H1 (cell line): ENCODE measurements at regions of chr20 and their contacts with region 1.

Region 1: GRCh38 chr20:44217342-44218092 is 6.9 kb upstream of the OSER1 start:
- DNase-seq: peak; percentile 66 to 81
- H3K4me3 ChIP-seq: no peak overlapping the region
- H3K27ac ChIP-seq: no peak overlapping the region
- H3K4me1 ChIP-seq: peaks cover 0 to 2% (median 0%) of the 10 kb centered on the region in 4 experiments; a peak in 1 of 7 replicates
- H3K27me3 ChIP-seq: no peaks in the 10 kb centered on the region
- CTCF ChIP-seq: peak; percentile 94 to 98 (median 95)
- EP300 ChIP-seq: no peak
- POLR2A ChIP-seq: no peak
- RAD21 ChIP-seq: peak; percentile 95

Region 2: DNA sequence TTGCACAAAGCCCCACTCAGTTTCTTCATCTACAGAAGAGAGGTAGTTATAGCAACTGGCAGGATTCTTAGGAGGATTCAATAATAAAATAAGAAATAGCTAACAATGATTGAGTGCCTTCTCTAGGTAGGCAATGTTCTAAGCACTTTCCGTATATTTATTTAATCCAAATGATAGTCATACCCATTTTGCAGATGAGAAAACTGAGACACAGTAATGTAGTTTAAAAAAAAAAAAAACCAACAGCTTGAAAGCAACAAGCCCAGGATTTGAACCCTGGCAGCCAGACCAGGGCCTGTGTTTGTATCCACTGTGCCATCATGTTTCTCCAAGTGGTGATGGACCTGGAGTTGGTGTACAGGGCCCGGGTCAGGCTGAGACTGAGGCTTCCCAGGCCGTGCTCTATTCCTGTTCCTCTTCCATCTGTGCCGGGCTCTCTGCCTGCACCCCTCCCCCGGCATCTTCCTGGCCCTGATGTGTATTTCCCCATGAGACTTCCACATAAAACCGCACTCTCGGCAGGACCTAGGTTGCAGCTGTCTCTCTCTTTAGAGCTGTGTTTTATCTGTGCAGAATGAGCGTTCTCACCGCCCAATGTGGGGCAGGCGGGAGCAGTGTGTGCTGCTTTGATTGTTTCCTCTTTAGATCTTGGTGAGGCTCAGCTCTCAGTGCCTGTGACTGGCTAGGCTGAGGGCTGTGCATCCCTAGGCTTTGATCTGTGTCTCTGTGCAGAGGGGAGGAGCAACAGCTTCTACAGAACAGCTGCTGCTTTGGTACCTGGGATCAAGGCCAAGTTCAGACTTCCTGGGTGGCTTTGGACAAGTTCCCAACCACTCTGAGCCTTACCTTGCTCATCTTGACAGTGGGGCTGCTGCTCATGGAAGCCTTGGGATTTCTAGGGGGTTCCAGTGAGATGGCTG is 253.4 kb before region 1 on chr20:
- CTCF ChIA-PET with region 1: no interaction called
- POLR2A ChIA-PET with region 1: no interaction called
- DNase-seq: no peak
- H3K4me3 ChIP-seq: no peak overlapping the region
- H3K27ac ChIP-seq: no peak overlapping the region
- H3K4me1 ChIP-seq: peaks cover 0 to 20% (median 5%) of the 10 kb centered on the region in 4 experiments; a peak in 5 of 7 replicates
- H3K27me3 ChIP-seq: peaks cover 0 to 4% (median under 1%) of the 10 kb centered on the region in 4 experiments; a peak in 3 of 7 replicates
- CTCF ChIP-seq: no peak
- EP300 ChIP-seq: no peak
- POLR2A ChIP-seq: no peak
- RAD21 ChIP-seq: no peak

Region 3: GRCh38 chr20:44041001-44041400 is 176.5 kb before region 1 on chr20:
- CTCF ChIA-PET with region 1: no interaction called
- POLR2A ChIA-PET with region 1: no interaction called
- DNase-seq: peak in 1 of 2 experiments; percentile 39
- H3K4me3 ChIP-seq: no peak overlapping the region
- H3K27ac ChIP-seq: no peak overlapping the region
- H3K4me1 ChIP-seq: no peaks in the 10 kb centered on the region
- H3K27me3 ChIP-seq: no peaks in the 10 kb centered on the region; a peak in 1 of 7 replicates
- CTCF ChIP-seq: peak in 1 of 3 experiments; percentile 27; a peak in 1 of 4 replicates
- EP300 ChIP-seq: no peak
- POLR2A ChIP-seq: no peak
- RAD21 ChIP-seq: no peak

Region 4: DNA sequence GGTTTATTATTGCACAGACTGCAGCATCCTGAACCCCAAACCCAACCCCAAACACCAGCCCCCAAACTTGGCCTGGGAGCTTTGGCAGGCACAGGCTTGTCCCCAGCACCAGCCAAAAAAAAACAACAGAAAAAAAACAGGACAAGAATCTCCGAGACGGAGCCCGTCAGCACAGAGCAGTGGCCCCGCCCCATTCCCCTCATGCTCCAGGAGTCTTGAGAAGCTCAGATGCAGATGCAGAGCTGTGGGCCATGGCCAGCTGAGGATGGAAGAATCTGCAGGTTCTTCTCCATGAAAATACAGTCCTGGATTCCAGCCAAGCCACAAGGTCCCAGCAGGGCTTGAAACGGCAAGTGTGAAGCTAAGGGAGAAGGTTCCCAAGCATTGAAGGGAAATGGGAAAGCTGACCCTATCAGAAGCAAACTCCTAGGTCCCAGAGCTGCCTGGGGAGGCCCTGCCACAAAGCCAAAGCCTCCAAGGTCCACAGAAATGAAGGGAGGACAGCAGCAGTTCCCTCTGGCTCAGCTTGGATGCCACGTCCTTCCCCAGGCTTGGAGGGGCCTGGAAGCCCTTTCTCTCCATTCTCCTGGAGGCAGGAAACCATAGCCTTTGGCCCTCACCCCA is 105.7 kb before region 1 on chr20:
- CTCF ChIA-PET with region 1: interaction called, 19 read pairs
- POLR2A ChIA-PET with region 1: no interaction called
- DNase-seq: no peak
- H3K4me3 ChIP-seq: no peak overlapping the region
- H3K27ac ChIP-seq: no peak overlapping the region
- H3K4me1 ChIP-seq: no peaks in the 10 kb centered on the region; a peak in 1 of 7 replicates
- H3K27me3 ChIP-seq: no peaks in the 10 kb centered on the region
- CTCF ChIP-seq: no peak
- EP300 ChIP-seq: no peak
- POLR2A ChIP-seq: no peak
- RAD21 ChIP-seq: no peak

Region 5: DNA sequence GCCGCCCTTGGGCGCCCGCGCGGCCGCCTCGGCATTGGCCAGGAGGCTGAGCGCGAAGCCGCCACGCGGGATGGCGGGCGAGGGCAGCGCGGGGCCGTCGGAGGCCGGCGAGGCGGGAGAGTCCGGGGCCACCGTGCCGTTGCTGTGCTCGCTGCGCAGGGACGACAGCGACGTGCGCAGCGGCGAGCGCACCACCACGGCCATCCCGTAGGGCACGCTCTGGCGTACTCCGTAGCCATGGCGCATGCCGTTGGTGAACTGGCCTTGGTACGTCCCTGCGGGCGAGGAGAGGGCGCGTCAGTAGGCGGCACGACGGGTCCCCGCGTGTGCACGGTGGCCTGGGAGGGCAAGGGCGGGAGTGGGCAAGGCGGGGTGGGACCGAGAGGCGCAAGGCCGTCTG is 57.4 kb before region 1 on chr20:
- CTCF ChIA-PET with region 1: no interaction called
- POLR2A ChIA-PET with region 1: no interaction called
- DNase-seq: no peak
- H3K4me3 ChIP-seq: no peak overlapping the region
- H3K27ac ChIP-seq: no peak overlapping the region
- H3K4me1 ChIP-seq: no peaks in the 10 kb centered on the region
- H3K27me3 ChIP-seq: no peaks in the 10 kb centered on the region
- CTCF ChIP-seq: no peak
- EP300 ChIP-seq: no peak
- POLR2A ChIP-seq: no peak
- RAD21 ChIP-seq: no peak

Region 6: DNA sequence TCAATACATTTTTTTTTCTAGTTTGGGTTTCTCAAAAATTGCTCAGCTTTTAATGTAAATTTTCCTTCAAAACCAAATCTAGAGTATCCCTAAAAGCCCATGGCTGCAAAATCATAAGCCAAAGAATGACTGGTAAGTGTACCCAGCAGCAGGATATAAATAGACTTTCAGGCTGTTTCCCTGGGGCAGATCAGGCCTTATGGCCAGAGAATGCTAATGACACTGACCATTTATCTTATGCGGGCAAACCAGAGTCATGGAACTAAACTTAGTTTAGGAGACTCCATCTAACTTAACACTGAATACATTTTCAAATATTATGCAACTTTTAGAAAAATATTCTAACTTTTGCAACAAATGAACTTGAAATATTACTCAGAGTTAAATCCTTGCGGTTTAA is 14.4 kb before region 1 on chr20:
- CTCF ChIA-PET with region 1: no interaction called
- POLR2A ChIA-PET with region 1: no interaction called
- DNase-seq: no peak
- H3K4me3 ChIP-seq: no peak overlapping the region
- H3K27ac ChIP-seq: no peak overlapping the region
- H3K4me1 ChIP-seq: no peaks in the 10 kb centered on the region; a peak in 1 of 7 replicates
- H3K27me3 ChIP-seq: no peaks in the 10 kb centered on the region
- CTCF ChIP-seq: no peak
- EP300 ChIP-seq: no peak
- POLR2A ChIP-seq: no peak
- RAD21 ChIP-seq: no peak

Region 7: GRCh38 chr20:44247586-44248409 is 30.3 kb after region 1 on chr20:
- CTCF ChIA-PET with region 1: interaction called, 25 read pairs
- POLR2A ChIA-PET with region 1: interaction called, 3 read pairs
- DNase-seq: peak; percentile 63 to 96
- H3K4me3 ChIP-seq: peak overlapping the region; percentile 77 to 93 (median 84)
- H3K27ac ChIP-seq: no peak overlapping the region
- H3K4me1 ChIP-seq: peaks cover 0 to 5% (median 0%) of the 10 kb centered on the region in 4 experiments; a peak in 4 of 7 replicates
- H3K27me3 ChIP-seq: no peaks in the 10 kb centered on the region
- CTCF ChIP-seq: peak; percentile 85 to 99 (median 97)
- EP300 ChIP-seq: peak in 1 of 2 experiments; percentile 18; a peak in 1 of 3 replicates
- POLR2A ChIP-seq: no peak
- RAD21 ChIP-seq: peak; percentile 49 to 61

Region 8: DNA sequence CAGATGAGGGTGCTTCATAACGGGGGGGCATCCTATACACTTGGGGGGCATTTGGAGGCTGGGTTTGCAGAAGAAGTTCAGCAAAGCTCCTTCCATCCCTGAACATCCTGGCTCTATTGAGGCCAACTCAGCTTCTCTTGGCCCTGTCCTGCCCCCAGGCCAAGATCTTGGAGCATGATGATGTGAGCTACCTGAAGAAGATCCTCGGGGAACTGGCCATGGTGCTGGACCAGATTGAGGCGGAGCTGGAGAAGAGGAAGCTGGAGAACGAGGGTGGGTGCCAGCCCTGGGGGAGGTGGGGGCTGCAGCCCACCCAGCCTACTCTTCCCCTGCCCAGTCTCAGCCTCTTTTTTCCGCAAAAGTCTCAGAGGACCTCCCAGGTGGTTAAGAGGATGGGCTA is 46.8 kb after region 1 on chr20:
- CTCF ChIA-PET with region 1: interaction called, 24 read pairs
- POLR2A ChIA-PET with region 1: no interaction called
- DNase-seq: no peak
- H3K4me3 ChIP-seq: no peak overlapping the region
- H3K27ac ChIP-seq: no peak overlapping the region
- H3K4me1 ChIP-seq: no peaks in the 10 kb centered on the region; a peak in 1 of 7 replicates
- H3K27me3 ChIP-seq: no peaks in the 10 kb centered on the region
- CTCF ChIP-seq: no peak
- EP300 ChIP-seq: no peak
- POLR2A ChIP-seq: no peak
- RAD21 ChIP-seq: no peak

Region 9: DNA sequence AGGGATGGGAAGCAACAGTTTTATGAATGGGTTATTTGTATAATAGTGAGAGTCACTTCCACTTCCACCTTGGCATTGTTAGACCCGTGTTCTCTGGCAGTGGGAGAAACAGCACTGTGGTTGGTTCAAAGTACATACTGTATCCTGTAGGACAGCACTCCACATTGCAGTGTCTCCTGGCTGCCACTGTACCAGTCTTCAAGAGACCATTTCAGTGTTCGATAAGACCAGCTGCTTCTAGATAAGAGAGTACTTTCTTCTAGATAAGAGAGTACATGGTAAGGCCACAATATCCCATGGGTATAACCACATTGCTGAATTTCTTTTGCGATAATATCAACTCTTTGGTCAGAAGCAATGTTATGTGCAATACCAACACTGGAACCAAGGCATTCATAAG is 64.7 kb after region 1 on chr20:
- CTCF ChIA-PET with region 1: interaction called, 13 read pairs
- POLR2A ChIA-PET with region 1: interaction called, 3 read pairs
- DNase-seq: no peak
- H3K4me3 ChIP-seq: no peak overlapping the region
- H3K27ac ChIP-seq: no peak overlapping the region
- H3K4me1 ChIP-seq: no peaks in the 10 kb centered on the region
- H3K27me3 ChIP-seq: no peaks in the 10 kb centered on the region; a peak in 1 of 7 replicates
- CTCF ChIP-seq: no peak
- EP300 ChIP-seq: no peak
- POLR2A ChIP-seq: no peak
- RAD21 ChIP-seq: no peak

Region 10: DNA sequence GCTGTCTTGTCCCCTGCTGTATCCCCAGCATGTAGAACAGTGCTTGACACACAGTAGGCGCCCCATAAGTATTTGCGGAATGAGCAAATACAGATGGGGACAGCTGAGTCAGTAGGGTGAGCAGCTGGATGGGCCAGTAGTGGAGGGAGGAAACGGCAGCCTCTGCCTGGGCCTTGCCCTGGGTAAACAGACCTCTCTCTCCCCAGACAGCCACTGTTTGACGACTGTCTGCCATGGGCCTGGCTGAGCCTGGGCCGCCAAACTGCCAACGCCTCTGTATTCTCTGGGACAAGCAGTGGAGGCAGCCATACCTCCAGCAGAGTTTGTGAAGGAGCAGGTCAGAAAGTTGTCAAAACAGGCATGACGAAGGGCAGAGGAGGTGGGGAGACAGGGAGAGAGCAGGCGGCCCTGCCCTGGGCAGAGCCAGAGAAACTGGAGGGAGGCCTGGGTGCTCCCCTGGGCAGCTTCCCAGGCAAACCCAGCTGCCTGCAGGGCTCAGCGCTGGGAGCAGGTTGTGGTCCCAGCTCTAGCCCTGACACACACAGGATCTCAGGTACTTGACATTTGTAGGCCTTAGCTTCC is 153.2 kb after region 1 on chr20:
- CTCF ChIA-PET with region 1: interaction called, 19 read pairs
- POLR2A ChIA-PET with region 1: no interaction called
- DNase-seq: no peak
- H3K4me3 ChIP-seq: no peak overlapping the region
- H3K27ac ChIP-seq: no peak overlapping the region
- H3K4me1 ChIP-seq: peaks cover 0 to 5% (median 0%) of the 10 kb centered on the region in 4 experiments; a peak in 3 of 7 replicates
- H3K27me3 ChIP-seq: no peaks in the 10 kb centered on the region
- CTCF ChIP-seq: no peak
- EP300 ChIP-seq: no peak
- POLR2A ChIP-seq: no peak
- RAD21 ChIP-seq: no peak

Region 11: DNA sequence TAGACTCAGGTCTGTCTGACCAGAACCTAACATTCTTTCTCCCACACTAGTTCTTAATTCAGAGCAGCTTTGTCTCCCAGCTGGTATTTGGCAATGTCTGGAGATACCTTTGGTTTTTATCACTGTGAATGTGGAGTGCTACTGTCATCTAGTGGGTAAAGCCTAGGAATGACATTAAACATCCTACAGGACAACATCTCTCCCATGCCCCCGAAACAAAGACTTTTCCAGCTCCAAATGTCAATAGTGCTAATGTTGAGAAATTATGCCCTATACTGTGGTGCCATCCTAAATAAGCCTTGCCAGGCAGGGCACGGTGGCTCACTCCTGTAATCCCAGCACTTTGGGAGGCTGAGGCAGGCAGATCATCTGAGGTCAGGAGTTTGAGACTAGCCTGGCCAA is 254.0 kb after region 1 on chr20:
- CTCF ChIA-PET with region 1: interaction called, 25 read pairs
- POLR2A ChIA-PET with region 1: no interaction called
- DNase-seq: no peak
- H3K4me3 ChIP-seq: no peak overlapping the region
- H3K27ac ChIP-seq: no peak overlapping the region
- H3K4me1 ChIP-seq: peaks cover 2 to 7% (median 2%) of the 10 kb centered on the region in 4 experiments; a peak in 5 of 7 replicates
- H3K27me3 ChIP-seq: no peaks in the 10 kb centered on the region; a peak in 1 of 7 replicates
- CTCF ChIP-seq: peak in 2 of 3 experiments; percentile 32 to 46; a peak in 2 of 4 replicates
- EP300 ChIP-seq: no peak
- POLR2A ChIP-seq: no peak
- RAD21 ChIP-seq: peak; percentile 67 to 68